ENCODE measurements at regions of chr7 and their contacts with region 1.

Region 1: DNA sequence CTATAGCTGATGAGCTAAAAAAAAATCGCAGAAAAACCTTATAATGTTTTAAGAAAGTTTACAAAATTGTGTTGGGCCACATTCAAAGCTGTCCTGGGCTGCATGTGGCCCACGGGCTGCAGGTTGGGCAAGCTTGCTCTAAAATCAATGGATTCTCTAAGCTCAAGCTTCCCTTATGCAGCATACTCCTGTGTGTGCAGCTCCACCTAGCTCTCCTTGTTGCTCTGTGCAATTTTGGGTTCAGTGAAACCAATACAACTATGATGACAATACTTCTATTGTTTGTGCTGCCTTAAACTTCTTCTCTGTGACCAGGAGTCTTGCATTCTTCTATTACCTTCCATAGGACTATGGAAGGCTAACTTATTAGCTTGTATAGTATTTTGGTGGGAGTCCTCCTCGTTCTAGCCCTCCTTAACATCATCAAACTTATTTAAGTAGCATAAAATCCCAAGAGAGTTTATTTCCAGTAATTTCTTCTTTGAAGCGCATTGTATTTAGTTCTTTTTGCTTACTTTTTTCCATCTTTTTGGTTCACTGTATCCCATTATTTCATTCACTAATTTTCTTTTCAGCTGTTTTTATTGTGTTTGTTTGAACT is 170.9 kb upstream of the SMIM30 start:
- DNase-seq: peak; percentile 56
- ATAC-seq: peak; percentile 88
- H3K4me3 ChIP-seq: no peak overlapping the region
- H3K27ac ChIP-seq: no peak overlapping the region
- H3K4me1 ChIP-seq: no peaks in the 10 kb centered on the region
- H3K27me3 ChIP-seq: no peaks in the 10 kb centered on the region
- CTCF ChIP-seq: peak; percentile 53

Region 2: DNA sequence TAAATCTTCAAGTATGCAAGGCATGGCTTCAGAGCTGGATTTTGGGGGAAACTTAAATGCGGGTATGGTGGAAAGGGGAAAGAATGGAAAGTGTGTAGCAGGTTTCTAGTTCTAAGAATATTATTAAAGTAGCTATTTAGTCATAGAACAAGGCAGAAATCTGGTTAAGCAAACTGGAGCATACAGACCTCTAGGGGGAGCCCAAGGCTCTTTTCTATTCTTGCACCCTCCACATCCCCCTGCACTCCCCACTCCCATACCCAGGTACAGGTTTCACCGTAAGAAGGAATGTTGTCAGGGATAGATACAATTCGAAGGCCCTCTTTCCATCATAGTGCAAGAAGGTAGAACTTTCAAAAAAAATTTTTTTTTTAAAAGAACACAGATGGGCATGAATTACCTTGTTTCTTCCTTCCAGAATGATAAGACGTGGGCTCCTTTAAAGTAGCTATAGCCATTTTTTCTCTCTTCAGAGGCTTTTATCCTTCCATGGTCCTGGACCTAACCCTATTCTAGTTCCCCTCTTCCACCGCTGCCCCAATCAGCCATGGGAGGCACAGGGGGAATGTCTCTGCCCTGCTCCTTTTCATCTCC is 129.4 kb before region 1 on chr7:
- CTCF ChIA-PET with region 1: interaction called, 5 read pairs
- POLR2A ChIA-PET with region 1: no interaction called
- intact Hi-C with region 1: loop called (anchors 1 kb)
- DNase-seq: peak; percentile 38
- ATAC-seq: peak; percentile 57; the same call in 1 of the 2 replicates
- H3K4me3 ChIP-seq: no peak overlapping the region
- H3K27ac ChIP-seq: no peak overlapping the region
- H3K4me1 ChIP-seq: no peaks in the 10 kb centered on the region
- H3K27me3 ChIP-seq: no peaks in the 10 kb centered on the region
- CTCF ChIP-seq: peak; percentile 69

Region 3: DNA sequence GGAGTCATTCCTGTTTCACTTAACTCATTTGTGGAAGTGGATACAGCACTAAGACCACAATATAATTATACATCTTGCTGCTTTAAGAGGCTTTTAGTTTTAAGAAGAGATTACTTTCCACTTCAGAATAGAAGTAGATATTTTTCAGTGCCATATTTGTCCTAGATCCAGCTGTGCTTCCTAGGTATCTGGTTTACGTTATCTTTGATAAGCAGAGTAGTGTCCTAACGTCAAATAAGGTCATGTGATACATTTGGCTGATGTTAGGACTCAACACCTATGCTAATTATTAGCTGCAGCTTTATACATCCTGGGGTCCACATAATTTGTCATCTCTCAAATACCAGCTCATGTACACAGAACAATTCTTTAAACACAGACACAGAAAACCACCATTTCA is 25.4 kb after region 1 on chr7:
- CTCF ChIA-PET with region 1: no interaction called
- POLR2A ChIA-PET with region 1: no interaction called
- intact Hi-C with region 1: no loop called
- DNase-seq: no peak
- ATAC-seq: no peak
- H3K4me3 ChIP-seq: no peak overlapping the region
- H3K27ac ChIP-seq: no peak overlapping the region
- H3K4me1 ChIP-seq: no peaks in the 10 kb centered on the region
- H3K27me3 ChIP-seq: no peaks in the 10 kb centered on the region
- CTCF ChIP-seq: no peak

Measured in PC-3 (cell line).